A673 (cell line): ENCODE measurements at regions of chr1 and their contacts with region 1.

Region 1: GRCh38 chr1:205631727-205632373 is at the start of gene ELK4:
- DNase-seq: peak; percentile 99
- H3K4me3 ChIP-seq: peak within 1 kb of the TSS; percentile 69
- H3K27ac ChIP-seq: peak within 1 kb of the TSS; percentile 79
- H3K4me1 ChIP-seq: peaks cover 7% of the 10 kb centered on the region
- H3K27me3 ChIP-seq: peaks cover 4% of the 10 kb centered on the region
- CTCF ChIP-seq: peak; percentile 77
- total RNA-seq, gene ELK4: 35.4 and 38.2 TPM in 2 replicates

Region 2: GRCh38 chr1:205396967-205397616 is 234.8 kb before region 1 on chr1:
- CTCF ChIA-PET with region 1: no interaction called
- POLR2A ChIA-PET with region 1: no interaction called
- intact Hi-C with region 1: loop called (anchors 10 kb)
- DNase-seq: peak; percentile 88
- H3K4me3 ChIP-seq: no peak overlapping the region
- H3K27ac ChIP-seq: no peak overlapping the region
- H3K4me1 ChIP-seq: peaks cover 20% of the 10 kb centered on the region
- H3K27me3 ChIP-seq: no peaks in the 10 kb centered on the region
- CTCF ChIP-seq: peak; percentile 87

Region 3: DNA sequence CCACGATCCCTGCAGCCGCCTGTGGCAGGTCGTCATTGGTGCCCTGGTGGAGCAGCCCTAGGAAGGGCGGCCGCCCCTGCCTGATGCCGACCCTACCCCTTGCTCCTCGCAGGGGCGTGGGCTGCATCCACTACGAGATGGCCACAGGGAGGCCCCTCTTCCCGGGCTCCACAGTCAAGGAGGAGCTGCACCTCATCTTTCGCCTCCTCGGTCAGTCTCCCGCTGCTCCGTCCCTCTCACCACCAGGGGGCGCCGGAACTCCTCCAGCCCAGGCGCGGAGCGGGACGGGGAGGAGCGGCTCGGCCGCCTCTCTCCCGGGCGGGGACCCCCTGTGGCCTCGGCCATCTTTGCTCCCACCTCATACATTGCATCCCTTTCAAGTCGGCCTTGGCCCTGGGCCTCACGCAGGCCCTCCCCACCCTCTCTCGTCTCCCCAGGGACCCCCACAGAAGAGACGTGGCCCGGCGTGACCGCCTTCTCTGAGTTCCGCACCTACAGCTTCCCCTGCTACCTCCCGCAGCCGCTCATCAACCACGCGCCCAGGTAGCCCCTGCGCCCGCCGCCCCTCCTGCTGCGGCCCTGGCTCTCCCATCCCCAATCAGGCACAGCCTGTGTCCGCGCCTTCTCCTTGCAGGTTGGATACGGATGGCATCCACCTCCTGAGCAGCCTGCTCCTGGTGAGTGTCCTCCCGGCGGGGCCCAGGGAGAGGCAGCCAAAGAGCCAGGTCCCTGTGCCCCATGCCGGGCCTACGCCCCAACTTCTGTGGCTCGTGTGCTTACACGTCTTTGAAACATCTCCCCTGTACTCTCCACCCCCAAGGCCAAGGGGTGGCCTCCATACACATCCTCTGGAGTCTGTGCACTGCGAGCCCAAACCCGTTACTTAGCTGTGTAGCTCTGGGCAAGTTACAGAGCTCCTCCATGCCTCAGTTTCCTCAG is 102.7 kb before region 1 on chr1:
- CTCF ChIA-PET with region 1: interaction called, 5 read pairs
- POLR2A ChIA-PET with region 1: no interaction called
- intact Hi-C with region 1: loop called (anchors 2 kb)
- DNase-seq: peak; percentile 91
- H3K4me3 ChIP-seq: peak overlapping the region; percentile 32
- H3K27ac ChIP-seq: no peak overlapping the region
- H3K4me1 ChIP-seq: peaks cover 13% of the 10 kb centered on the region
- H3K27me3 ChIP-seq: no peaks in the 10 kb centered on the region
- CTCF ChIP-seq: peak; percentile 97

Region 4: GRCh38 chr1:205543411-205544301 is 88.2 kb before region 1 on chr1:
- CTCF ChIA-PET with region 1: no interaction called
- POLR2A ChIA-PET with region 1: no interaction called
- intact Hi-C with region 1: loop called (anchors 5 kb)
- DNase-seq: peak; percentile 89
- H3K4me3 ChIP-seq: peak overlapping the region; percentile 31
- H3K27ac ChIP-seq: peak overlapping the region; percentile 45
- H3K4me1 ChIP-seq: peaks cover 11% of the 10 kb centered on the region
- H3K27me3 ChIP-seq: peaks cover 5% of the 10 kb centered on the region
- CTCF ChIP-seq: no peak

Region 5: GRCh38 chr1:205591522-205592351 is 40.1 kb before region 1 on chr1:
- CTCF ChIA-PET with region 1: interaction called, 18 read pairs
- POLR2A ChIA-PET with region 1: no interaction called
- intact Hi-C with region 1: loop called (anchors 2 kb)
- DNase-seq: peak; percentile 84
- H3K4me3 ChIP-seq: no peak overlapping the region
- H3K27ac ChIP-seq: no peak overlapping the region
- H3K4me1 ChIP-seq: no peaks in the 10 kb centered on the region
- H3K27me3 ChIP-seq: peaks cover 10% of the 10 kb centered on the region
- CTCF ChIP-seq: peak; percentile 97

Region 6: DNA sequence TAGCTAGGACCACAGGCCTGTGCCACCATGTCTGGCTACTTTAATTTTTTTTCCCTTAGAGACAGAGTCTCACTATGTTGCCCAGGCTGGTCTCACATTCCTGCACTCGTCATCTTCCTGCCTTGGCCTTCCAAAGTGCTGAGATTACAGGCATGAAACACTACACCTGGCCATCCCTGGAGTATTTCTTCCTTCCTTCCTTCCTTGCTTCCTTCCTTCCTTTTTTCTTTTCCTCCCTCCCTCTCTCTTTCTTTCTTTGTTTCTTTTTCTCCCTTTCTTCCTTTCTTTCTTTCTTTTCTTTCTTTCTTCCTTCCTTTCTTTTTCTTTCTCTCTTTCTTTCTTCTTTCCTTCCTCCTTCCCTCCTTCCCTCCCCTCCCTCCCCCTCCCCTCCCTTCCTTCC is 264.5 kb after region 1 on chr1:
- CTCF ChIA-PET with region 1: no interaction called
- POLR2A ChIA-PET with region 1: no interaction called
- intact Hi-C with region 1: no loop called
- DNase-seq: no peak
- H3K4me3 ChIP-seq: no peak overlapping the region
- H3K27ac ChIP-seq: no peak overlapping the region
- H3K4me1 ChIP-seq: no peaks in the 10 kb centered on the region
- H3K27me3 ChIP-seq: no peaks in the 10 kb centered on the region
- CTCF ChIP-seq: no peak